ENCODE measurements at regions of chr11 and their contacts with region 1.

Region 1: GRCh38 chr11:108887436-108888238 is 222.8 kb downstream of the DDX10 start:
- DNase-seq: no peak
- H3K4me3 ChIP-seq: no peak overlapping the region
- H3K27ac ChIP-seq: no peak overlapping the region
- H3K4me1 ChIP-seq: peaks cover 56% of the 10 kb centered on the region
- H3K27me3 ChIP-seq: no peaks in the 10 kb centered on the region
- CTCF ChIP-seq: no peak

Region 2: DNA sequence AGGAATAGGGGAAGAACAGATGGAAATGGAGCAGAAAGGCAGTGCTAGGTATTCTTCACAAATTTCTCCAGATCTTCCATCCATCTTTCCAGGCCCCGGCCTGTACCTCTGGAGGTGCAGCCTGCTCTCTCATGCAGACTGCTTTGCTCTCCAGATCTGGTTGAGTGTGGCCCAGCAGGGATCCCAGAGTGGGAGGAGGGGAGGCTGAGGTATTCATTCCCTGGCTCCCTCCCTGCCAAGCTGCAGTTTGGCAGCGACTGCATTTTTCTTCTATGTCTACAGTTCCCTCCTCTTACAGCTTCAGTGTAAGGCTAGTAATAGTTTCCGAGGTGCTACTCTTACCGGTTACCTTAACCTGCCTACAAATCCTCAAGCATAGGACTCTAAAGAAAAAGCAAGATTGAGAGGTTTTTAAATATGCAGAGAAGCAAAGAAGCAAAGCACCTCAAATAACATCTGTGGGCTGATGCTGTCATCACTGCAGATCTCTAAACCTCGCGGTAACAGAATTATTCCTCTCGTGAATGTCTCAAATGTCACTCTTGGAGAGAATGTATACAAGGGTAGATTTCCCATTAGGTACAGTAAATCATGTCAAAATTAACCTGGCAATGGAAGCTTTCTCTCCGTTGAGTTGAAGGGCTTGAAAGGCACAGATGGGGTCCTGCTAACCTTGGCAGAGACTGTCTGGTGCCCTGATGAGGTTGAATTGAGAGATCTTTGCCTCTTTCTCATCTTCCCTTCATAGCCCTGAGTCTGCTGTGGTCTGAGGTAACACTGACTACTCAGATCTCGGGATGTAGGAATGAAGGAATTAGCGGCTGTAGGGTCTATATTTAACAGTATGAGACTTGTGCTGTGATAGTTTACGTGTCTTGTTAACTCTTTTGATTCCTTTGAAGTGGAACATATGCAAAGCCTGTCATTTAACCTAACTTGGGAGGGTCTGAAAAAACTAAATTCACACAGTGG is 236.5 kb after region 1 on chr11:
- CTCF ChIA-PET with region 1: no interaction called
- POLR2A ChIA-PET with region 1: no interaction called
- intact Hi-C with region 1: no loop called
- DNase-seq: peak; percentile 35
- H3K4me3 ChIP-seq: no peak overlapping the region
- H3K27ac ChIP-seq: no peak overlapping the region
- H3K4me1 ChIP-seq: no peaks in the 10 kb centered on the region
- H3K27me3 ChIP-seq: no peaks in the 10 kb centered on the region
- CTCF ChIP-seq: no peak

Region 3: GRCh38 chr11:109197656-109198055 is 310.0 kb after region 1 on chr11:
- CTCF ChIA-PET with region 1: no interaction called
- POLR2A ChIA-PET with region 1: no interaction called
- intact Hi-C with region 1: loop called (anchors 10 kb)
- DNase-seq: no peak
- H3K4me3 ChIP-seq: no peak overlapping the region
- H3K27ac ChIP-seq: no peak overlapping the region
- H3K4me1 ChIP-seq: peaks cover 17% of the 10 kb centered on the region
- H3K27me3 ChIP-seq: no peaks in the 10 kb centered on the region
- CTCF ChIP-seq: no peak

Region 4: DNA sequence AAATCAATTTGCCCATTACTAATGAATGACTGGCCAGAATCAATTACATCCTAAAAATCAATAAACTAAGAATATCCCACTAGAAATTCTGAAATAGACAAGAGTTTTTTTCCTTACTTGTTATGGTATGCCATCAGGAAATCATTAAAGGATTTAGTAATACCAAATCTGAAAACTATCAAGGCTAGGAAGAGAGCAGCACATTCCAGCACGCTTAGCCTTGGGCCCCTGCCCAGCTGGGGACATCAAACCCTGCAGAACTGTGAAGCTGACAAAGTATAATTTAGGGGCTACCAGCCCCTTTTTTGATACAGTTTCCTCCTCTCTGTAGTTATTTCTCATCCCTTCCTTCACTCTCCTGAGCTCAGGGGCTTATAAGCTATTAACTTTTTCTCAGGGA is 957.8 kb after region 1 on chr11:
- CTCF ChIA-PET with region 1: no interaction called
- POLR2A ChIA-PET with region 1: no interaction called
- intact Hi-C with region 1: loop called (anchors 10 kb)
- DNase-seq: peak; percentile 95
- H3K4me3 ChIP-seq: no peak overlapping the region
- H3K27ac ChIP-seq: peak overlapping the region; percentile 66
- H3K4me1 ChIP-seq: peaks cover 54% of the 10 kb centered on the region
- H3K27me3 ChIP-seq: no peaks in the 10 kb centered on the region
- CTCF ChIP-seq: no peak